GM13976 (cell line): ENCODE measurements at regions of chr12 and their contacts with region 1.

Region 1: DNA sequence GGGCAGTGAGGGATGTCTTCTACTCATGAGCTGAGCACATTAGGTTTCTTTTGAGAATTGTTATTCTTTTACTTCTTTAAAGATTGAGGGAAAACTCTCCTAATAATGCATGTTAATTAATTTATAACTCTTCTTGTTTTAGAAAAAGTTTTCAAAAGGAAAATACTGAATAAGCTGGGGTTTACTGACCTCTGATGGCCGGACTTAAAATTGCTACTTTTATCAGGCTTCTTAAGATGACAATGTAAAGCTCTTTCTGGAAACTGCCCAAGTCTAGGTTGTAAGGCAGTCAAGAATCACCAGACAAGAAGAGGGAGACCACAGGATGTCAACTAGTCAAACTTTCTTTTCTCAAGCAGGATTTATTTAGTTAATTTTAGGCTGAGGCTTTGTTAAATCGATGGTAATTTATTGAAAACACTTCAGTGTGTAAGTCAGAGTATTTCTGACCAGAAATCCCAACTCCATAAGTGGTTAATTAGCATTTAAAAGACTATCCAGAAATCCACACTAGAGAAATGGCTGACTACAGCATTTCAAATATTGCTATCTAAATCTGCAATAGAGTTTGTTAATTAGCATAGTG is 82.1 kb downstream of the AVPR1A start:
- DNase-seq: no peak
- CTCF ChIP-seq: no peak

Region 2: DNA sequence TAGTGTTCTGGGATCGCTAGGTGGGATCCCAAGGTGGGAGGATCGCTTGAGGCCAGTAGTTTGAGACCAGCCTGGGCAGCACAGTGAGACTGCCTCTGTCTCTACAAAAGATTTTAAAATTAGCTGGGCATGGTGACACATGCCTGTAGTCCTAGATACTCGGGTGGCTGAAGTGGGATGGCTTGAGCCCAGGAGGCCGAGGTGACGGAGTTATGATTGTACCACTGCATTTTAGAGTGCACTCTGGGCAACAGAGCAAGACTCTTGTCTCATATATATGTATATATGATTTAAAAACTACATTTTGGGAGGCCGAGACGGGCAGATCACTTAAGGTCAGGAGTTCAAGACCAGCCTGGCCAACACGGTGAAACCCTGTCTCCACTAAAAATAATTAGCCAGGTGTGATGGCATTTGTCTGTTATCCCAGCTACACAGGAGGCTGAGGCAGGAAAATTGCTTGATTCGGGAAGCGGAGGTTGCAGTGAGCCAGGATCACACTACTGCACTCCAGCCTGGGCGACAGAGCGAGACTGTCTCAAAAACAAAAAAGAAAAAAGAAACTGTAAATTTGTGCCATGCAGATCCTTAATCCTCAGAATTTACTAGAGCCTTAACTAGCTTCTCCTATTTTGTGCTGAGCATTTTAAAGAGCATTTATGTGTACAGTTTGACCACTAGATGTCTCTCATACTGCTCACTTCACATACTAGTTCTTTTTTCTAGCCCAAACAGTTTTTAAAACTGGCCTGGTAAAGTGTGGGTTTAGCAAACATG is 487.5 kb before region 1 on chr12:
- in situ Hi-C with region 1: loop called (anchors 25 kb)
- DNase-seq: peak; percentile 50
- CTCF ChIP-seq: peak; percentile 49